ENCODE measurements at regions of chr13 and their contacts with region 1.

Region 1: DNA sequence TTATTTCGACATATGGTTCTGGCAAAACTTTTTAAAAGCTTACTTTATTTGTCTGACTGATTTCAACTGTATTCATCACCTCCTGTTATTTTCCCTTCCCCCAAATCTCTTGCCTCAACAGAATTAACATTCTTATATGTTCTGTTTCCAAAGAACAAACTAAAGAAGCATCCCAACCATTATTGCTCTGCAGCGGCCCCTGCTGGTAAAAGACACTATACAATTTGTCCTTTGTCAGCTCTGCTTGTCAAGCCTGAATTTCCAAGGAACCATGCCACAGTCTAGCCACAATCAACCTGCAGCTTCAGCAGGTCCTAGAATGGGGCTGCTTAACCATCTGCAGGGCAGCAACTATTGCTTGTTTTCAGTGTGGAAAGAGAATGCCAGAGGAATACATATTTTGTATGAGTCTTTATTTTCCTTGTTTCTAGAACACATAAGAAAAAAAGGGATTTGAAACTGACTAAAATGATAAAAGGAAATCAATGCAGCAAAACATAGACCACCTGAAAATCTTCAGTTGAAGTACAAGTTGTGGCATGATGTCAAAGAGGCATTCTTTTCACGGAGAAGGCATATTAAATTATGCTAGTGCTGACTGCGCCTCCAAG is 845.3 kb downstream of the DIAPH3 start:
- DNase-seq: peak; percentile 3 to 14 (median 8)
- H3K4me3 ChIP-seq: no peak overlapping the region
- H3K4me3 Mint-ChIP-seq: no peak overlapping the region
- H3K27ac ChIP-seq: no peak overlapping the region
- H3K27ac Mint-ChIP-seq: no peak overlapping the region
- H3K4me1 ChIP-seq: no peaks in the 10 kb centered on the region
- H3K4me1 Mint-ChIP-seq: no peaks in the 10 kb centered on the region
- H3K27me3 ChIP-seq: no peaks in the 10 kb centered on the region
- H3K27me3 Mint-ChIP-seq: peaks cover 0 to 2% (median 0%) of the 10 kb centered on the region in 3 donors
- CTCF ChIP-seq: peak; percentile 83

Region 2: GRCh38 chr13:57624565-57625435 is 1693.6 kb before region 1 on chr13:
- intact Hi-C with region 1: loop called (anchors 5 to 10 kb)
- DNase-seq: peak in 2 of 3 donors; percentile 8 to 45
- H3K4me3 ChIP-seq: no peak overlapping the region
- H3K4me3 Mint-ChIP-seq: no peak overlapping the region
- H3K27ac ChIP-seq: no peak overlapping the region
- H3K27ac Mint-ChIP-seq: no peak overlapping the region
- H3K4me1 ChIP-seq: peaks cover 2 to 3% of the 10 kb centered on the region in 2 donors
- H3K4me1 Mint-ChIP-seq: peaks cover 6% of the 10 kb centered on the region
- H3K27me3 ChIP-seq: peaks cover 23 to 26% of the 10 kb centered on the region in 2 donors
- H3K27me3 Mint-ChIP-seq: peaks cover 22 to 25% (median 24%) of the 10 kb centered on the region in 3 donors
- CTCF ChIP-seq: peak; percentile 84

Region 3: GRCh38 chr13:59570204-59570603 is 251.8 kb after region 1 on chr13:
- intact Hi-C with region 1: no loop called
- DNase-seq: no peak
- H3K4me3 ChIP-seq: no peak overlapping the region
- H3K4me3 Mint-ChIP-seq: no peak overlapping the region
- H3K27ac ChIP-seq: no peak overlapping the region
- H3K27ac Mint-ChIP-seq: no peak overlapping the region
- H3K4me1 ChIP-seq: no peaks in the 10 kb centered on the region
- H3K4me1 Mint-ChIP-seq: no peaks in the 10 kb centered on the region
- H3K27me3 ChIP-seq: no peaks in the 10 kb centered on the region
- H3K27me3 Mint-ChIP-seq: peaks cover 0 to 4% (median 0%) of the 10 kb centered on the region in 3 donors
- CTCF ChIP-seq: no peak